MCF 10A (cell line): ENCODE measurements at regions of chr4 and their contacts with region 1.

Region 1: DNA sequence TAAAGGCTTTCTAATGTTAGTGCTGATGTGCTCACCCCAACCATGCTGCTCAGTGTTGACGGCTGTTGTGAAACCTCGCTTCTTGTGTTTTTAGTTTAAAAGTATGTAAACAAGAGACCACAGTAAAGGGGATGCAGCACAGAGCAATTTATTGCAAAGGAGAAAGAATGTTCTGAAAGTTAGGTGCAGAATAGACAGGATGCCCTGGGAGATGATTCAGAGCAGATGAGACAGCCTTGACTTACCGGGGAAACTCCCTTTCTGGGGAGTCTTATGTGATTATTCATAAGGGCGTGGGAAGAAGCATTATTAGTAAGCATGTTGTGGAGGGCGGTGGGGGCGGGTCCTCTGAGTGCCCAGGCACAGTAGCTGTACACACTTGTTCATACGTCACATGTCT is 47.7 kb downstream of the EVC start:
- DNase-seq: peak; percentile 94
- H3K4me3 Mint-ChIP-seq: no peak overlapping the region
- H3K27ac Mint-ChIP-seq: peak overlapping the region; percentile 86
- H3K4me1 Mint-ChIP-seq: peaks cover 27% of the 10 kb centered on the region
- H3K27me3 Mint-ChIP-seq: no peaks in the 10 kb centered on the region
- CTCF ChIP-seq: no peak

Region 2: DNA sequence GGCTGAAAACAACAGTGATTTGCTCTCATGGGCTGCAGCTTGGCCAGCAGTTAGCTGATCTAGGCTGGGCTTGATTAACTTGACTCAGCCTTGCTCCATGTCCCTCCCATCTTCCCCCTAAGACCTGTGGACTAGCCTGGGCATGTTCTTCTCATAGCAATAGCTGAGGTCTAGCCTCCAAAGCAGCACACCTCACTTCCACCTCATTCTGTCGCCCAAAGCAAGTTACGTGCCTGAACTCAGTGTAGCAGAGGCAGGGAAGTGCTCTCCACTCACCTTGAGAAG is 14.5 kb after region 1 on chr4:
- CTCF ChIA-PET with region 1: interaction called, 3 read pairs
- POLR2A ChIA-PET with region 1: interaction called, 10 read pairs
- intact Hi-C with region 1: no loop called
- DNase-seq: peak; percentile 92
- H3K4me3 Mint-ChIP-seq: no peak overlapping the region
- H3K27ac Mint-ChIP-seq: peak overlapping the region; percentile 97
- H3K4me1 Mint-ChIP-seq: peaks cover 21% of the 10 kb centered on the region
- H3K27me3 Mint-ChIP-seq: no peaks in the 10 kb centered on the region
- CTCF ChIP-seq: no peak

Region 3: GRCh38 chr4:5785806-5786680 is 27.3 kb after region 1 on chr4:
- CTCF ChIA-PET with region 1: interaction called, 14 read pairs
- POLR2A ChIA-PET with region 1: interaction called, 3 read pairs
- intact Hi-C with region 1: loop called (anchors 2 kb)
- DNase-seq: peak; percentile 69
- H3K4me3 Mint-ChIP-seq: no peak overlapping the region
- H3K27ac Mint-ChIP-seq: peak overlapping the region; percentile 58
- H3K4me1 Mint-ChIP-seq: peaks cover 9% of the 10 kb centered on the region
- H3K27me3 Mint-ChIP-seq: no peaks in the 10 kb centered on the region
- CTCF ChIP-seq: no peak

Region 4: DNA sequence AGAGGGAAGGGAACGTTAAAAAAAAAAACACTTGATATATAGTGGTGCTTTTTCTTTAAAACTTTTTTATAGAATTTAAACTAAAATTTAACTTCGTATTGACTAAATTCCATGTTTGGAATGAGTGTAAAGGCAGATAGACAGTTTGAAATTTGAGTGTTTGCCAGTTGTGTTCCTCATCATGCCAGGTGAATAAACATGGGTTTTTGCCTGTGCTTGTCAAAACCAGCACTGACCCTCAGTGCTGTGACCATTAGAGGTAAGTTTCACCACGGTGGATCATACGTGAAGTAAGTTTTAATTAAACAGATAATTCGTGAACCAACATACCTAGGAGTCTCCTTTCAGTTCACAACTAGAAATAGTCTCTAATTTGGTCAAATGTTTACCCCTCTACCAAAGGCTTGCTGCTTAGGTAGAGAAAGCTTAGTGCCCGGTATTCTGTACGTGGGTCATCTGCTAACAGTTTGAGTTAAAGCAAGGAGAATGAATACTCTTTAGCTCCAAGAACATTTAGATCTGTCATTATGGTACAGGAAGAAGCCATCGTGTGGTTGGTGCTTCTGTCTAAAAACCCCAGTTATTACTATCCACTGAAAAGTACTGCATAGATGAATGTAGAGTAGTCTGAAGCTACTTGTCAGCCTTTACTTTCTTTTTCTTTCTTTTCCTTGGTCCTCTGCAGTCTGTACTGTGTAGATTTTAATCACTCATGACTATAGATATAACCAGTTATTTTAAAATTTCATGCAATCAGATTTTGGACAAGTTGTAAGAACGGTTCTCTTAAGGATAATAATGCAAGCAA is 1056.5 kb after region 1 on chr4:
- CTCF ChIA-PET with region 1: no interaction called
- POLR2A ChIA-PET with region 1: no interaction called
- intact Hi-C with region 1: no loop called
- DNase-seq: no peak
- H3K4me3 Mint-ChIP-seq: no peak overlapping the region
- H3K27ac Mint-ChIP-seq: no peak overlapping the region
- H3K4me1 Mint-ChIP-seq: peaks cover 22% of the 10 kb centered on the region
- H3K27me3 Mint-ChIP-seq: no peaks in the 10 kb centered on the region
- CTCF ChIP-seq: no peak